Activated B cell treated with CpG ODN at 0.5 μM for 24 hours (primary cell): ENCODE measurements at regions of chr4 and their contacts with region 1.

Region 1: GRCh38 chr4:55948726-55949474 is at the start of gene CEP135:
- DNase-seq: peak; percentile 94
- ATAC-seq: peak; percentile 79
- H3K4me3 Mint-ChIP-seq: peak within 1 kb of the TSS; percentile 94
- H3K27ac Mint-ChIP-seq: peak within 1 kb of the TSS; percentile 99
- H3K4me1 Mint-ChIP-seq: peaks cover 58% of the 10 kb centered on the region
- H3K27me3 Mint-ChIP-seq: no peaks in the 10 kb centered on the region
- CTCF ChIP-seq: peak; percentile 63
- total RNA-seq, gene CEP135: 24.7 and 30.2 TPM in 2 replicates

Region 2: GRCh38 chr4:55546756-55547465 is 402.0 kb before region 1 on chr4 and contains the start of gene CLOCK:
- CTCF ChIA-PET with region 1: no interaction called
- POLR2A ChIA-PET with region 1: interaction called, 9 read pairs
- intact Hi-C with region 1: loop called (anchors 1 kb)
- DNase-seq: peak; percentile 88
- ATAC-seq: peak; percentile 76
- H3K4me3 Mint-ChIP-seq: peak within 1 kb of the TSS; percentile 92
- H3K27ac Mint-ChIP-seq: peak within 1 kb of the TSS; percentile 90
- H3K4me1 Mint-ChIP-seq: peaks cover 29% of the 10 kb centered on the region
- H3K27me3 Mint-ChIP-seq: peaks cover 6% of the 10 kb centered on the region
- CTCF ChIP-seq: no peak
- total RNA-seq, gene CLOCK: 10.4 and 12.9 TPM in 2 replicates

Region 3: DNA sequence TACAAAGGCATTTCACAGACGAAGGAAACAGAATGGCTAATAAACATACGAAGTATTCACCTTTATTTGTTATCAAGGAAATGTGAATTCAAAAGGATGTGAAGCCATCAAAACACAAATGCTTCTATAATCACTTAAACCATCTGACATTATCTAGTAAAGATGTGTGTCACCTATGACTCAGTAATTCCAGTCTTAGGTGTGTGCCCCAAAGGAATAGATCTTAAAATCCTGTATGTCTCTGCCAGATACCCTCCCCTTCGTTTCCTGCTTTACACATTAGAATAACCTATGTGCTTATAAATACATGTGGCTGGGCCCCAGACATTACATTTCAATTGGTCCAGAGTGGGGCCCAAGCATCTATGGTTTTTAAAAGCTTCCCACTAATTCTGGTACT is 41.9 kb before region 1 on chr4:
- CTCF ChIA-PET with region 1: no interaction called
- POLR2A ChIA-PET with region 1: interaction called, 5 read pairs
- intact Hi-C with region 1: loop called (anchors 2 kb)
- DNase-seq: no peak
- ATAC-seq: no peak
- H3K4me3 Mint-ChIP-seq: no peak overlapping the region
- H3K27ac Mint-ChIP-seq: no peak overlapping the region
- H3K4me1 Mint-ChIP-seq: peaks cover 7% of the 10 kb centered on the region
- H3K27me3 Mint-ChIP-seq: no peaks in the 10 kb centered on the region
- CTCF ChIP-seq: no peak

Region 4: GRCh38 chr4:56048702-56049431 is 100.0 kb after region 1 on chr4:
- CTCF ChIA-PET with region 1: interaction called, 12 read pairs
- POLR2A ChIA-PET with region 1: interaction called, 7 read pairs
- intact Hi-C with region 1: loop called (anchors 1 kb)
- DNase-seq: peak; percentile 47
- ATAC-seq: peak; percentile 95
- H3K4me3 Mint-ChIP-seq: peak overlapping the region; percentile 79
- H3K27ac Mint-ChIP-seq: no peak overlapping the region
- H3K4me1 Mint-ChIP-seq: peaks cover 20% of the 10 kb centered on the region
- H3K27me3 Mint-ChIP-seq: peaks cover 25% of the 10 kb centered on the region
- CTCF ChIP-seq: no peak

Region 5: DNA sequence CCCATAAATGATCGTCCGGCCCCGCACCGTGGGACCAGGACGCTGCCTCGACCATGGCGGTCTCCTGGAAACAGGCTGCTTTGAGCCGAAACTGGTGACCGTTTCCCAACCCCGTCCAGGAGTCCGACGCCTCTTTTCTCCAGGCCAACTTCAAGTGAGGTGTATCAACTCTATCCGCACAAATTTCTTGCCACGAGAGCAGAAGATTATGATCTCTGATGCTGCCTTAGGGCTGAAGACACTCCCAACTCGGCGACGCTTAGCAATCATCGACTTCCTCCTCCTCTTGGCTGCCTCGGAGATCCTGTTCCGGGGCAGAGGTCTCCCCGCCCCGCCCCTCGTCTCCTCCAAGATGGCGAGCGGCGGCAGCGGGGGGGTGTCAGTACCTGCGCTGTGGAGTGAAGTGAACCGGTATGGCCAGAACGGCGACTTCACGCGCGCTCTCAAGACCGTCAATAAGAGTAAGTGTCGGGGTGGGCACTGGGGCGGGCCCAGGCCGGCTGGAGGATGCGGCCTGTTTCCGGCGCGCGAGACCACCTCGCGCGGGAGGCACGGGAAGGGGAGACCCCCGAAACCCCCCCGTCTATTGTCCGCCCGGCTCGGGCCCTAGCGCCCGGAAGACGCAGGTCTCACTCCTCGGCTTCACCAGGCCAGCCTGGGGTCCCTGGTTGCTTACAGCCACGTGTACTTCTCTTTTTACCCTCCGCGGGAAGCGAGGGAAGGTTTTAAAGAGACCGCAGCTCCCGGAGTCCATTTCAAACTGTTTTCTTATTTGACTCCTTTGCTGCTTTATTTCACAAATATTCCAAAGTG is 518.6 kb after region 1 on chr4 and contains the start of gene SRP72:
- CTCF ChIA-PET with region 1: no interaction called
- POLR2A ChIA-PET with region 1: interaction called, 3 read pairs
- intact Hi-C with region 1: loop called (anchors 1 kb)
- DNase-seq: peak; percentile 83
- ATAC-seq: peak; percentile 96
- H3K4me3 Mint-ChIP-seq: peak within 1 kb of the TSS; percentile 99
- H3K27ac Mint-ChIP-seq: peak within 1 kb of the TSS; percentile 96
- H3K4me1 Mint-ChIP-seq: peaks cover 57% of the 10 kb centered on the region
- H3K27me3 Mint-ChIP-seq: no peaks in the 10 kb centered on the region
- CTCF ChIP-seq: no peak
- total RNA-seq, gene SRP72: 139 TPM in 2 replicates

Region 6: DNA sequence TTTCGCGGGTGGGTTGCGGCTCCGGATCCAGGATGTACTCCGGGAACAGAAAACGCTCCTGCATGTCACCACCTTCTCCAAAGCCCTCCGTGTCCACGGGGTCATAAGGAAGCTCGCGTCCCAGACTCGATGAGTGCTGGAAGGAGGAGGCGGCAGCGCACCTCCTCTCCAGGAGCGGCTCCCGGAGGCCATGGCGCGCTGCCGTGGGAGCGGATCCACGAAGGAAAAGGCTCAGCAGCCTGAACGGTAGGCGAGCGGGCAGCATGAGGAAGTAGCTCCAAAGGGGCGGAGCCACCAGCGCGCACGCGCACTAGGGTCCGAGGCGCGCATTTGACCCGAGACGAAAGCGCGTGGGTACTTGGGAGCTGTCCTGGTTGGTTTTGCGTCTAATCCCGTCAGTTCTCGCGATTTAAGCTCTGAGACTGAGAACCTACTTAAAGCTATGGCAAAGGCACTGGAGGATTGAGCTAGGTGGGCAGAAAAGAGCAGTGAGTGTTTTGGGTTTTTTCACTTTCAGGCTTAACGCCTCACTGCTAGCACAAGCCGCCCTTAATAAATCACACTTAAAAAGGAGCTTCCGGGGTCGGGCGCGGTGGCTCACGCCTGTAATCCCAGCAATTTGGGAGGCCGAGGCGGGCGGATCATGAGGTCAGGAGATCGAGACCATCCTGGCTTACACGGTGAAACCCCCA is 1028.6 kb after region 1 on chr4 and contains the start of gene NOA1:
- CTCF ChIA-PET with region 1: interaction called, 3 read pairs
- POLR2A ChIA-PET with region 1: interaction called, 11 read pairs
- intact Hi-C with region 1: loop called (anchors 1 kb)
- DNase-seq: peak; percentile 98
- ATAC-seq: peak; percentile 86
- H3K4me3 Mint-ChIP-seq: peak within 1 kb of the TSS; percentile 99
- H3K27ac Mint-ChIP-seq: peak within 1 kb of the TSS; percentile 96
- H3K4me1 Mint-ChIP-seq: peaks cover 70% of the 10 kb centered on the region
- H3K27me3 Mint-ChIP-seq: no peaks in the 10 kb centered on the region
- CTCF ChIP-seq: no peak
- total RNA-seq, gene NOA1: 24.1 and 25.0 TPM in 2 replicates